Thyroid gland (tissue), 4 donors: ENCODE measurements at regions of chr5 and their contacts with region 1.

Region 1: GRCh38 chr5:128213340-128213739 is 129.8 kb downstream of the SLC12A2 start:
- DNase-seq: peak; percentile 36 to 50
- H3K4me3 ChIP-seq: no peak overlapping the region
- H3K27ac ChIP-seq: no peak overlapping the region
- H3K4me1 ChIP-seq: peaks cover 0 to 15% of the 10 kb centered on the region in 2 donors
- H3K27me3 ChIP-seq: no peaks in the 10 kb centered on the region
- CTCF ChIP-seq: peak in 5 of 6 experiments; percentile 29 to 72 (median 62)
- POLR2A ChIP-seq: no peak

Region 2: GRCh38 chr5:128498844-128499455 is 285.6 kb after region 1 on chr5:
- intact Hi-C with region 1: loop called (anchors 10 kb)
- DNase-seq: no peak
- H3K4me3 ChIP-seq: no peak overlapping the region
- H3K27ac ChIP-seq: no peak overlapping the region
- H3K4me1 ChIP-seq: no peaks in the 10 kb centered on the region
- H3K27me3 ChIP-seq: no peaks in the 10 kb centered on the region
- CTCF ChIP-seq: peak in 2 of 6 experiments; percentile 13 to 21
- POLR2A ChIP-seq: no peak

Region 3: DNA sequence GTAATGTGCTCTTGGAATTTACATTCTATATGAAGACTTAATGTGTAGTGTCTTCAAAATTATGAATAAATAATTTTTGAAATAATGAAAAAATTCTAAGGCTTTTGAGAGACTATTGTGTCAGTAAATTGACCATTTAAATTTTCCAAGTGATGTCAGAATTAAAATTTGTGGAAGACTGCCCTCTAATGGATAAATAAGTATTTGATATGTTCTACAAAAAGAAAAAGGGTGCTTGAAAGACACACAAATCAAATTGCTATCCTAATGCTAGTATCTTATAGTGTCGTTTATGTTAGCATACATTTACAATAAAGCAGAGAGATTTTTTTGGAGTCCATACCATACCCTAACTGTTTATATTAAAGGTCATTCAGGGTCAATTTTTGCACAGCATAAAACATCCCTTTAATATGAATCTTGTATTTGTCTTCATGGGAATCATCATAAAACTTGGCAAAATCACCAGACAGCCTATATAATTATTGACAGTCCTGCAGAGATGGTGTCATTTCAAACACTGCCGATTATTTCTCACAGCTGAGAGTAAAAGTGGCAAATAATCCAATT is 631.1 kb after region 1 on chr5:
- intact Hi-C with region 1: loop called (anchors 10 kb)
- DNase-seq: no peak
- H3K4me3 ChIP-seq: no peak overlapping the region
- H3K27ac ChIP-seq: no peak overlapping the region
- H3K4me1 ChIP-seq: no peaks in the 10 kb centered on the region
- H3K27me3 ChIP-seq: no peaks in the 10 kb centered on the region
- CTCF ChIP-seq: peak in 3 of 6 experiments; percentile 19 to 26 (median 25)
- POLR2A ChIP-seq: no peak